ENCODE measurements at regions of chr9 and their contacts with region 1.

Region 1: GRCh38 chr9:18208154-18209059 is 265.5 kb upstream of the ADAMTSL1 start:
- DNase-seq: peak; percentile 58
- ATAC-seq: peak; percentile 72

Region 2: DNA sequence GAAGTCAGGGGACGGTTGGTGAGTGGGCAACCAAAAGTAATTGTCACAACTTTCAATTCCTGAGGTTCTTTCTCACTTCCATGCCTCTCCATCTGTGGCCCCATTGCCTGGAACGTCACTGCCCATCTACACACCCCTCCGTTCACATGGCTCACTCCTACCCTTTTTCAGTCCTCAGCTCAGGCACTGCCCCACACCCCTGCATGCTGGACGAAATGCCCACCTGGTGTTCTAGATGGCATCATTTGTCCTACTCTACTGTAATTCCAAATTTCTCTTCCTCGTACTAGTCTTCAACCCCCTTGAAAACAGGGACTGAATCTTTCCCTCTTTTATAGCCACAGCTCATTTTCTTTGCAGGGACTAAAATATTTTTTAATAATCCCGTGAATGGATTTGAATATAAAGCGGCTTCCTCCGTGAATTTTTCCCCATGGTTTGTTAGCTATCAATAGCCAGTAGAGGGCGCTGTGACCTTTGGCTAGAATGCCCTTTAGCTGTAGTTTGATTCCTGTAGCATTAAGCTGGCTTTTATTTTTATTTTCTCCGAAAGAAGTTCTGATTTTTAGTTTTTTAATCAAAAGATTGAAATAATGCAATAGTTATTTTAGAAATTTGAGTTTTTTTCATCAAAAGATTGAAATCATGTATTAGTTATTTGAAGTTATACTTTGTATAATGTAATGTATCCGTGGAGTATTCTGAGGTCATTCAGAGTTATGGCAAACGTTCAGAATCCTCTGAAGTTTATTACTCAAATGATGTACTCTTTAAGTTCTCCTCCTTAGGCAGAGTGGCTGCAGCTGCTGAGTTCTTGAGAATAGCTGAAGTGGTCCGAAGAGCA is 397.5 kb before region 1 on chr9:
- intact Hi-C with region 1: loop called (anchors 5 kb)
- DNase-seq: peak; percentile 76
- ATAC-seq: no peak